ENCODE measurements at regions of chr11 and their contacts with region 1.

Region 1: DNA sequence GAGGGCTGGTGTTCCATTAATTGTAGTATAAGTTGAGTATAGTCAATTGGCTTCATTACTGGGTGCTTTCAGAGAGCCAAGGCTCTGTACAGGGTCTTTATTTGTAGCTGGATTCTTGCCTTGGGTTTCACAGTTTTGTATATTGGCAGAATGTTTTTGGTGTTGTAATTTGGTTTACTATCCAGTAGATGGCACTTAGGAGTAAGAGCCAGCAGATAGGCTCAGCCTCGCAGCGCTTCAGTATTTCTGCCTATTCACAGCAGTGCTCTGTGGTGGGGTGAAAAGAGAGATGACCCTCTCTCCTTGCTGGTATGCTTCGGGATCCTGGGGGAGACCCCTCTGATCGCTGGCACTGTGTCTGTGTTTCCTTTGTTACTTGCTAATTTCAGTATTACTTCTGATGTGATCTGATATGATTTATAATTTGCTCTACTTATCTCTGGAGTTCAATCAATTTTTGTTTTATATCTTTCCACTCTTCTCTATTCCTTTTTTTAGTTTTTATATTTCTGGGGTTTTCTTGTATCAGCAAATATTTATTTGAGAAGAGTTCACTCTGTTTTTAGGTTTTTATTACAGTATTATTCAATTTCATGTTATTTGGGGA is 52.2 kb downstream of the ANO5 start:
- H3K4me3 ChIP-seq: no peak overlapping the region
- H3K27ac ChIP-seq: no peak overlapping the region
- H3K4me1 ChIP-seq: no peaks in the 10 kb centered on the region
- CTCF ChIP-seq: no peak

Region 2: DNA sequence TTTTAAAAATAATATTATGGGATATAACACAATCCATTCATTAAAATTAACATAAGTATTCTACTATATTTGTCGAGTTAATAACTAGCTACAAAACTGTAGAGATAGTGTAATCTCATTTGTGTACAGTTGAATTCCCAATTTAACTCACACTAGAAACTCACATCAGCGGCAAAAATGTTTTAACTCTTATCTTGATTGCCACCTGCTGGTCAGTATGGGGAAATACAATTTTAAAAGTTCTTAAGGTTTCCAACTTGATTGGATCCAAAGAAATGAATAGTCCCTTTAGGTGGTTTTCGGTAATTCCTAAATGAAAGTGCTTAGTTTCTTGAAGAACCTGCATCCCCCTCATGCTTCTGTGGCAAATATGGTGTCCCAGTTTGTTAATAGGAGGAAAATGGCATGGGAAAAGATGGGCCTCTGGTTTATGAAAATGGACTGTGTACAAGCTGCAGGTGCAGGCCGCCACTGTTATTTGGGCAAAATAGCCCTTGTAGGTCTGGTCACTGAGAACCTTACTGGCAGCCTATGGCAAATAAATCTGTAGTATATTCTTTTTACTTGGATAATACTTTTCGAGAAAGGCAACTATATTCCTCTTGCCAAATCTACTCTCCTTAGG is 59.4 kb after region 1 on chr11:
- CTCF ChIA-PET with region 1: interaction called, 13 read pairs
- POLR2A ChIA-PET with region 1: no interaction called
- H3K4me3 ChIP-seq: no peak overlapping the region
- H3K27ac ChIP-seq: no peak overlapping the region
- H3K4me1 ChIP-seq: no peaks in the 10 kb centered on the region
- CTCF ChIP-seq: no peak

Measured in HEK293 (cell line).